ENCODE measurements at regions of chr1 and their contacts with region 1.

Region 1: GRCh38 chr1:32005522-32005921 is 8.1 kb upstream of the KHDRBS1 start:
- DNase-seq: no peak
- H3K4me3 ChIP-seq: no peak overlapping the region
- H3K27ac ChIP-seq: no peak overlapping the region
- H3K4me1 ChIP-seq: peaks cover 2 to 13% (median 8%) of the 10 kb centered on the region in 4 experiments
- H3K27me3 ChIP-seq: no peaks in the 10 kb centered on the region
- CTCF ChIP-seq: no peak
- EP300 ChIP-seq: no peak
- POLR2A ChIP-seq: no peak
- RAD21 ChIP-seq: no peak

Region 2: GRCh38 chr1:31923901-31924535 is 81.5 kb before region 1 on chr1:
- CTCF ChIA-PET with region 1: no interaction called
- POLR2A ChIA-PET with region 1: no interaction called
- DNase-seq: no peak
- H3K4me3 ChIP-seq: no peak overlapping the region
- H3K27ac ChIP-seq: no peak overlapping the region
- H3K4me1 ChIP-seq: peaks cover 0 to 6% (median 0%) of the 10 kb centered on the region in 4 experiments; a peak in 1 of 7 replicates
- H3K27me3 ChIP-seq: no peaks in the 10 kb centered on the region
- CTCF ChIP-seq: no peak
- EP300 ChIP-seq: no peak
- POLR2A ChIP-seq: no peak
- RAD21 ChIP-seq: no peak

Region 3: DNA sequence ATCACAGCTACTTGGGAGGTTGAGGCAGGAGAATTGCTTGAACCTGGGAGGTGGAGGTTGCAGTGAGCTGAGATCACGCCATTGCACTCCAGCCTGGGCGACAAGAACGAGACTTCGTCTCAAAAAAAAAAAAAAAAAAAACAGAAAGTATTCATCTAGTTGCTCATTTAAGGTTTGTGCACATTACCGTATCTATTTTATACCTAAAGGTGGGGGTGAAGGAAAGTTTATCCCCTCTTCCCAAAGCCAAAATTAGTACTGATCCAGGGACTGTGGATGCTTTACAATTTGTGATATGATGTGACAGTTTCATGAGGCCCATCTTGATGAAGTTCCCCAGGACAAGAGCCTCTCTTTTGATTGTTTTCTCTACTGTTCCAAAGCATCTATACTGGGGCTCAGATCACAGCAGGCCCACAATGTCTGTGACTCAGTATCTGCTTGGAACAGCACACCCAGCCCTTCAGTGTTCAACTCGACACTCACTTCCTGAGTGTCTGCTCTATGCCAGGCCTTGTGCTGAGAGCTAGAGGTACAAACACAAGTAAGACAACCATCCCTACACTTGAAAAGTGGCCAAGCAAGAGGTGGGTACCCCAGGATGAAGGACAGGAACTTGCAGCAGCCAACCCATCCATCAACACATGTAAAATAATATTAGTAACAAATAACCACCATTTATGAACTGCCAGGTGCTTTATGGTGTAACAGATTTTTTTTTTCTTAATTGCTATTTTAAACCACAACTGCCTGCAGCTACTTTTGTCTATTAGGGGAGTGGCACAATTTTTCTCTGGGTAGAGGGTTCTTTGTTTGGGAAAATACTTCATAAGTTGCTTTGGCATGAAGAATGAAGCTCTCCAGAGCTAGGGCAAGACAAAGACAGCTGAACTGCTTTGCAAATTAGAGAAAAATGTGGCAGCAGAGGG is 20.8 kb before region 1 on chr1:
- CTCF ChIA-PET with region 1: interaction called, 72 read pairs
- POLR2A ChIA-PET with region 1: interaction called, 4 read pairs
- DNase-seq: no peak
- H3K4me3 ChIP-seq: no peak overlapping the region
- H3K27ac ChIP-seq: no peak overlapping the region
- H3K4me1 ChIP-seq: peaks cover 0 to 6% (median 3%) of the 10 kb centered on the region in 4 experiments; a peak in 6 of 7 replicates
- H3K27me3 ChIP-seq: no peaks in the 10 kb centered on the region
- CTCF ChIP-seq: no peak
- EP300 ChIP-seq: no peak
- POLR2A ChIP-seq: no peak
- RAD21 ChIP-seq: no peak

Region 4: GRCh38 chr1:31991182-31991581 is 14.3 kb before region 1 on chr1:
- CTCF ChIA-PET with region 1: interaction called, 23 read pairs
- POLR2A ChIA-PET with region 1: interaction called, 3 read pairs
- DNase-seq: no peak
- H3K4me3 ChIP-seq: no peak overlapping the region
- H3K27ac ChIP-seq: no peak overlapping the region
- H3K4me1 ChIP-seq: peaks cover 0 to 6% (median 3%) of the 10 kb centered on the region in 4 experiments; a peak in 6 of 7 replicates
- H3K27me3 ChIP-seq: no peaks in the 10 kb centered on the region
- CTCF ChIP-seq: no peak
- EP300 ChIP-seq: no peak
- POLR2A ChIP-seq: no peak
- RAD21 ChIP-seq: no peak

Region 5: DNA sequence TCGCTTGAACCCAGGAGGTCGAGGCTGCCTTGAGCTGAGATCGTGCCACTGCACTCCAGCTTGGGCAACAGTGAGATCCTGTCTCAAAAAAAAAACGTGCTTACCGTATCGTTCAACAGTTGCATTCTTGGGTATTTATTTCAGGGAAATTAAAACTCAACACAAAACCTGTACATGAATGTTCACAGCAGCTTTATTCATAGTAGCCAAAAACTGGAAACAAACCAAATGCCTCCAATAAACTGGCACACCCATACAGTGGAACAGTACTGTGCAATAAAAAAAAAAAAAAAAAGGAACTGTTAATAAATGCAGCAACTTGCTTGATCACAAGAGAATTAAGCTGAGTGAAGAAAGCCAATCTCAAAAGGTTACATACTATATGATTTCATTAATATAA is 14.8 kb after region 1 on chr1:
- CTCF ChIA-PET with region 1: interaction called, 15 read pairs
- POLR2A ChIA-PET with region 1: interaction called, 3 read pairs
- DNase-seq: no peak
- H3K4me3 ChIP-seq: no peak overlapping the region
- H3K27ac ChIP-seq: no peak overlapping the region
- H3K4me1 ChIP-seq: peaks cover 0 to 6% (median 2%) of the 10 kb centered on the region in 4 experiments; a peak in 4 of 7 replicates
- H3K27me3 ChIP-seq: no peaks in the 10 kb centered on the region
- CTCF ChIP-seq: no peak
- EP300 ChIP-seq: no peak
- POLR2A ChIP-seq: no peak
- RAD21 ChIP-seq: no peak